SK-N-SH (cell line): ENCODE measurements at regions of chr11 and their contacts with region 1.

Region 1: DNA sequence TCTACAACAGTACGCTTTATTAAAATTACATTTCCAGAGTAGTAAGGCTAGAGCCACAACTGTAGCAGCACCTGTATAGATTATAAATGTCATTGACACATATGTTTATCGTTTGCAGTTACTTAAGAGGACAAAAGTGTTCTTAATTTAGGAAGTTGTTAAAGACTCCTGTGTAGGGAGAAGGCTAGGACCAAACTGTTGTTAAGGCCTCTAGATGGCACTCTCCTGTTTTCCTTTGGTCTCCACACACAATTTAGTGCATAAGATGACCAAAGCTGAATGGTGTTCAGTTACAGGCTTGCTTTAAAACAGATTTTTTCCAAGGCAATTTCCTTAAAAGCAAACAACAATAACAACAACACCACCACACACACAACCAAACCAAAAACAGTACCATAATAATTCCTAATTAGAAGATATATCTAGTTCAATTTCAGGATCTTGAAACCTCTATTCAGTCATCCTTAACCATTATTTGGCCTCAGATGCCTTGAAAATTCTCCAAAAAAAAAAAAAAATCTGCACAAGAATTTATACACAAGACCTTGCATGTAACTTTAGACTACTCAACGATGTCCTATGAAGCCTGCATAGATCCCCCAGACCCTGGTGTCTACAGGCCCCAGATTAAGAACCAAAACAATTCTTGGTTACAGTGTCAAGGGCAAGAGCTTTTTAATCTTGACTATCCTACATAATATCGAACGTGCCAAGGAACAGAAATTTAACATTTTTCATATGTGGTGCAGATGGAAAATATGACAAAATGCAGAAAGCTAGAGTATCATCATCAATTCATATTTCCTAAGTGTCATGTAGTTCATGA is 42.6 kb upstream of the APOA1 start:
- DNase-seq: peak; percentile 58
- H3K4me3 ChIP-seq: no peak overlapping the region; a peak in 1 of 4 replicates
- H3K27ac ChIP-seq: no peak overlapping the region; a peak in 1 of 4 replicates
- H3K4me1 ChIP-seq: no peaks in the 10 kb centered on the region; a peak in 2 of 4 replicates
- H3K27me3 ChIP-seq: no peaks in the 10 kb centered on the region
- CTCF ChIP-seq: peak; percentile 86
- EP300 ChIP-seq: no peak
- RAD21 ChIP-seq: peak; percentile 86

Region 2: GRCh38 chr11:116861539-116861938 is 18.5 kb before region 1 on chr11:
- CTCF ChIA-PET with region 1: interaction called, 20 read pairs
- POLR2A ChIA-PET with region 1: no interaction called
- DNase-seq: no peak
- H3K4me3 ChIP-seq: no peak overlapping the region
- H3K27ac ChIP-seq: peak overlapping the region; percentile 72 to 87
- H3K4me1 ChIP-seq: peaks cover 21 to 43% of the 10 kb centered on the region in 2 experiments
- H3K27me3 ChIP-seq: no peaks in the 10 kb centered on the region
- CTCF ChIP-seq: no peak
- EP300 ChIP-seq: no peak
- RAD21 ChIP-seq: no peak

Region 3: DNA sequence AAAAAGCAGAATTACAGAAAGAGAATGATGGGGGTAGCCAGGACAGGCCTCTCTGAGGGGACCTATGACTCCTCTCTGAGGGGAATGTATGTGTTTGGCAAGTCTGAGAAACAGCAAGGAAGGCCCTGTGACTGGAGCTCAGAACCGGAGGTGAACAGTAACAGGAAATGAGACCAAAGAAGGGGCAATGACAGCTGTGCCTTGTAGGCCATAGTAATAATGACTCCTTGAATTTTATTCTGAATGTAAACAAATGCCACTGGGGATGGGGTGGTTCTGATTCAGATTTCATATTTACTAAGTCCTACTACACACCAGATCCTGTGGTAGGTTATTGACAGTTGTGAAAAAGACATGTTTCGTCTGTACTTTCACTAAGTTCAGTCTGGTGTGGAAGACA is 10.2 kb after region 1 on chr11:
- CTCF ChIA-PET with region 1: interaction called, 27 read pairs
- POLR2A ChIA-PET with region 1: no interaction called
- DNase-seq: no peak
- H3K4me3 ChIP-seq: no peak overlapping the region
- H3K27ac ChIP-seq: no peak overlapping the region
- H3K4me1 ChIP-seq: peaks cover 0 to 7% of the 10 kb centered on the region in 2 experiments; a peak in 2 of 4 replicates
- H3K27me3 ChIP-seq: no peaks in the 10 kb centered on the region
- CTCF ChIP-seq: no peak
- EP300 ChIP-seq: no peak
- RAD21 ChIP-seq: no peak

Region 4: GRCh38 chr11:117098269-117099232 is 218.5 kb after region 1 on chr11 and contains the start of gene SIK3:
- CTCF ChIA-PET with region 1: interaction called, 79 read pairs
- POLR2A ChIA-PET with region 1: no interaction called
- DNase-seq: peak; percentile 100
- H3K4me3 ChIP-seq: peak within 1 kb of the TSS; percentile 82
- H3K27ac ChIP-seq: peak within 1 kb of the TSS; percentile 64 to 74
- H3K4me1 ChIP-seq: peaks cover 29 to 30% of the 10 kb centered on the region in 2 experiments
- H3K27me3 ChIP-seq: no peaks in the 10 kb centered on the region
- CTCF ChIP-seq: peak; percentile 52
- EP300 ChIP-seq: no peak; a peak in 1 of 4 replicates
- RAD21 ChIP-seq: peak; percentile 63
- polyA plus RNA-seq, gene SIK3: 4.5 and 5.1 TPM in 2 replicates

Region 5: GRCh38 chr11:117226388-117227385 is 346.7 kb after region 1 on chr11:
- CTCF ChIA-PET with region 1: interaction called, 10 read pairs
- POLR2A ChIA-PET with region 1: no interaction called
- DNase-seq: peak; percentile 84
- H3K4me3 ChIP-seq: no peak overlapping the region; a peak in 1 of 4 replicates
- H3K27ac ChIP-seq: no peak overlapping the region
- H3K4me1 ChIP-seq: peaks cover 14 to 16% of the 10 kb centered on the region in 2 experiments; a peak in 3 of 4 replicates
- H3K27me3 ChIP-seq: no peaks in the 10 kb centered on the region
- CTCF ChIP-seq: peak; percentile 79
- EP300 ChIP-seq: no peak
- RAD21 ChIP-seq: peak; percentile 90